AG04449 (cell line): ENCODE measurements at regions of chr3 and their contacts with region 1.

Region 1: DNA sequence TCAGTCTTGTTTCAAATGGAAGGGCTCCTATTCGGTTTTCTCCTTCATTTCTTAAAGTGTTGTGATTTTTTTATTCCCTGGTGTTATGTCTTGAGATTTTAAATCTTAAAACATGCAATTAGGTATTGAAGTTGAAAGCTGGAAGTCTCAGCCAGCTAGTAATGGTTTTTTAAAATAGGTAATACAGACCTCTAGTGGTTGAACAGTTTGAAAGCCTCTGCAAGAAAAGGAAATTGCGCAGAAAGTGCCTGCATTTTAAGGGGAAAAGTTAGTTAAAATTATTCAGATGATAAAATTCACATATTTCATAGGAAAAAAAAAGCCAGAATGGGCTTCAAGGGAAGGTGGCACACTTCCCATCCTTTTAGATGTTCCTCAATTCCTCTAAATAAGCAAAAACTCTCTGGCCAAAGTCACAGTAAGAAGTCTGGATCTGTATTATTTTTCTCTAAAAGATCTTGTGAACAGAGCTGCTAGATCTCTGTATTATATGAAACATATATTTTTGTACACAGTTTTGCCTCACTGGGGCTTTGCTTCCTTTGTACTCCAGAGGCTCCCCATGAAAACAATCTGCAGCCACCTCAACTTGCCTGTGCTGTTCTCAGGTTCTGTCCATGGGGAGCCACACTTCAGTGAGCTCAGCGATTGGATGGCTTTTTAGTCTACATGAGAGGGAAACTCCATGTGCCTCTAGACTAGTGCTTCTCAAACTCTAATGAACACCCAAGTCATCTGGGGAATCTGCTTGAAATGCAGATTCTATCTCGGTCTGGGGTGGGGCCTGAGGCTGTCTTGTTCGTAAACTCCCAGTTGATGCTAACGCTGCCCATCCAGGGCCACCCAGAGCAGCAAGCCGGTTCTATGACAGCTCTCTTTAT is 21.5 kb downstream of the AGTR1 start:
- DNase-seq: no peak
- H3K4me3 ChIP-seq: no peak overlapping the region
- CTCF ChIP-seq: peak; percentile 13

Region 2: DNA sequence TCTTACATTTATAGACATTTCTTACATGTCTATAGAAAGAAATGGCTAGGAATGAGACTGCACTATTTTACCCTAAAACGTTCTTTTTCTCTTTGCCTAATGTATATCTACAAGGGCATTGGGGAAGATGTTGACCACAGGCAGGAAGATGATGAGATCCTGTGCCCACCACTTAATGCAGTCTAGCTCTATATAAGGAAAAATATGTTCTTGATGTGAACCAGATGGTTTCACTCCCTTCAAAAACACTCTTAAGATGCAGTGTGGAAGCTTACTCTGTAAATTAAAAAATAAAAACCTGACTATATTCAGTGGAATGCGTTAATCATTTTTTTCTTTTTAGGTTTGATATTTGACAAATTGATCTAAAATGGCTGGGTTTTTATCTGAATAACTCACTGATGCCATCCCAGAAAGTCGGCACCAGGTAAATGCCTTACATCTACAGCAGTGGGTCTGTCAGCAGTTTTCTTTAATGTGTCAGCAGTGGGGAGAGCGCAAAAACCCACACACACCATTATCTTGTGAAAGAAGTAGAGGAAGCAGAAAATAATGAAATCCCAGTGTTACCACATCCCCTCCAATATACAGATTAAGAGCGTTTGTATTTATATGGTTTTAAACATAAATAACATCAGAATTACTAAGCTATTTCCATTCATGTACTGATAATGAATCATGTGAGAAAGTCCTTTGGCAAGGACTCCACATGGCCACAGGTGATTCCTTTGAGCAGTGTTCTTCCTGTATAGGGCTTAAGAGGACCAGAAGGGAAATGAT is 11.4 kb before region 1 on chr3:
- CTCF ChIA-PET with region 1: interaction called, 13 read pairs
- POLR2A ChIA-PET with region 1: no interaction called
- DNase-seq: no peak
- H3K4me3 ChIP-seq: no peak overlapping the region
- CTCF ChIP-seq: no peak

Region 3: DNA sequence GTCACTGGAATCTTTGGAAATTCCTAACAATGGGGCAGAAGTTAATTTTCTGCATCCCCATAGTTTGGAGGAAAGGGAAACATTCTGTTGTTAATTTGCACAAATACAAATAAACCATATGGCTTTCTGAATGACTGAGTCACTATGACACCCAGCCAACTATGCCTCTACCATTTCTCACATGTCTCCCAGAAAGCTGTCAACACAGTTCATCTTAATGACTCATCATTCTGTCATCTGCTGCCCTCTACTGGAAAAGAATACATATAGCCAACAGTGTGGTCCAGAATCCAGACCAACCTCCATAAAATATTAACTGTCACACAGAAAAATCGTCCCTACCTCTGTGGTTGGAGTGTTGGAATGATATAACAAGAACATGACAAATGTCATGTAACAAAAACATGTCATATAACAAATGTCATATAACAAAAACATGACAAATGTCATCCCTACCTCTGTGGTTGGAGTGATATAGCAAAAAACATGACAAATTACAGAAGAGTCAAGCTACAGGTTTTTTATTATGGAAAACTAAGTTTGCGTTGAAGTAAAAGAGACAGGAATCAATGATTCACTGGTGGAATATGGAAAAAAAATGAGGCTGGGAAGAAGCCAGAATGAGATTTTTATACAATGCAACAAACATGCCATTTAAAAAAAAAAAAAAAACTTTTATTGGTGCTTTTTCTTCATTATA is 224.4 kb after region 1 on chr3:
- CTCF ChIA-PET with region 1: interaction called, 76 read pairs
- POLR2A ChIA-PET with region 1: no interaction called
- DNase-seq: peak; percentile 69
- H3K4me3 ChIP-seq: no peak overlapping the region
- CTCF ChIP-seq: peak; percentile 50

Region 4: DNA sequence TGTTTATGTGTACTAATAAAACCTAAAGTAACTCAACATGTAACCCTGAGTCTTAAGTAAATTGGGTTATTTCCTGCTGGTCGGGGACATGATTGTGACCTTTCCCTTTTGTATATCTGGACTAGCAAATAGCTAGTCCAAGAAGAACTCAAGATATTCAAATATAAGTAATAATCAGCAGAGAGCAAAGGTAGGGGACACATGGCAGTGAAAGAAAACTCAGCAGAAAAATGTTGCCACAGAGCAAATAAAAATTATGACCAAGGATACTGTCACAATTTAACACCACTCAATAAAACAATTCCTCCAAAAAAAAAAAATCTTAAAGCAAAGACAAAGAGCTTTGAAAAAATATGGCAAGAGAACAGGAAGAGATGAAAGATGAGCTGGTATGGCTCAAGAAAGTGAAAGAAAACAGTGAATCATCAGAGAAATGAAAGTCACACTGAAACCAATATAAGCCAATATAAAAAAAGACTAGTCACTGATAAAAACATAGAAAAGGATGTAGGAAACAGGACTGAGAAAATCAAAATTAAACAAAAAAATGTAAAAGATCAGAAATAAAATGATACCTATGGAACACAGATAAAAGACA is 323.7 kb after region 1 on chr3:
- CTCF ChIA-PET with region 1: no interaction called
- POLR2A ChIA-PET with region 1: no interaction called
- DNase-seq: no peak
- H3K4me3 ChIP-seq: no peak overlapping the region
- CTCF ChIP-seq: no peak